Esophagus muscularis mucosa (tissue), 4 donors: ENCODE measurements at regions of chr19 and their contacts with region 1.

Region 1: GRCh38 chr19:36973021-36973843 is 57.1 kb downstream of the ZNF568 start:
- DNase-seq: peak; percentile 95
- H3K4me3 ChIP-seq: peak overlapping the region; percentile 67 to 77 (median 74)
- H3K27ac ChIP-seq: peak overlapping the region; percentile 82 to 87 (median 85)
- H3K4me1 ChIP-seq: peaks cover 10 to 18% (median 17%) of the 10 kb centered on the region in 4 donors
- H3K27me3 ChIP-seq: no peaks in the 10 kb centered on the region
- CTCF ChIP-seq: peak; percentile 93 to 96 (median 94)
- EP300 ChIP-seq: no peak
- POLR2A ChIP-seq: no peak

Region 2: DNA sequence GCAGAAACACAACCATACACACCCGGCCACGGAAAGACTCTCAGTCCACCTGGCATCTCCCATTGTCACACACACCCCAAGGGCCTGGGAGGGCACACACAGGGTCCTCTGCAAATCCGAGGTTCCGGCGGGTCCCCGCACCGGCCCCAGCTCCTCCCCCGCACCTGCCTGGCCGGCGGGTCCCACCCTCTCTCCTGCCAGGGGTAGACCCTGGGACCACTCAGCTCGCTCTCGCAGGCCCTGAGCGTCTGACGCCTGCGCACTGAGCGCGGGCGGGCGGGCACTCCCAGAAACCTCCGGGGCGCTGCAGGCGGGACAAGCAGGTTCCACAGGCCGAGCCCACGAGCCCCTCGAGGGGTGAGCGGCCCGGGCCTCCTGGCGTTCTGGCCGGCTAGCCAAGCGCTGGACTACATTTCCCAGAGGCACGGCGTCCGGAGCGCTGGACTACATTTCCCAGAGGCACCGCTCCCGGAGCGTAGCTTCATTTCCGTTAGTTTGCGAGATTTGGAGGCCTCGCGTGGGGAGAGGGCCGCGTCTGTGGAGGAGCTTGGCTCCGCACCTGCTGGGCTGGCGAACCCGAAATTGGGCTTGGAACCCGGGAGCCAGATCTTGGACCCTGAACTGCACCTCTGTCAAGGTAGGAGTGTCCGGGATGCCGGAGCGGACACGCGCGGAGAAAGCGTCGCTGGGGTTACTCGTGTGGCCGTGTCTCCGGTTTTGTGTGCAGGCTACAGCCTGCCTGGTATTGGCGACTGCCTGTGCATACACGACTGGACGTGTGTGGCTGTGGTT is 104.9 kb after region 1 on chr19 and contains the start of gene ZNF420:
- intact Hi-C with region 1: loop called (anchors 10 kb)
- DNase-seq: peak; percentile 96
- H3K4me3 ChIP-seq: peak within 1 kb of the TSS; percentile 73 to 98 (median 80)
- H3K27ac ChIP-seq: peak within 1 kb of the TSS; percentile 85 to 96 (median 92)
- H3K4me1 ChIP-seq: peaks cover 12 to 27% (median 21%) of the 10 kb centered on the region in 4 donors
- H3K27me3 ChIP-seq: no peaks in the 10 kb centered on the region
- CTCF ChIP-seq: no peak
- EP300 ChIP-seq: no peak
- POLR2A ChIP-seq: no peak
- total RNA-seq, gene ZNF420: 8.5 to 19.1 (median 12.8) TPM

Region 3: GRCh38 chr19:37217855-37218591 is 244.8 kb after region 1 on chr19 and contains the start of gene ZNF383:
- intact Hi-C with region 1: loop called (anchors 5 kb)
- DNase-seq: peak; percentile 95
- H3K4me3 ChIP-seq: peak within 1 kb of the TSS; percentile 79 to 87 (median 84)
- H3K27ac ChIP-seq: peak within 1 kb of the TSS; percentile 86 to 92 (median 89)
- H3K4me1 ChIP-seq: peaks cover 16 to 27% (median 22%) of the 10 kb centered on the region in 4 donors
- H3K27me3 ChIP-seq: no peaks in the 10 kb centered on the region
- CTCF ChIP-seq: no peak
- EP300 ChIP-seq: no peak
- POLR2A ChIP-seq: no peak
- total RNA-seq, gene ZNF383: 9.3 to 11.6 (median 11.2) TPM

Region 4: GRCh38 chr19:37370880-37371661 is 397.8 kb after region 1 on chr19 and contains the start of gene ZNF527:
- intact Hi-C with region 1: loop called (anchors 10 kb)
- DNase-seq: peak; percentile 99
- H3K4me3 ChIP-seq: peak within 1 kb of the TSS; percentile 69 to 82 (median 72)
- H3K27ac ChIP-seq: peak within 1 kb of the TSS; percentile 82 to 90 (median 88)
- H3K4me1 ChIP-seq: peaks cover 13 to 19% (median 17%) of the 10 kb centered on the region in 4 donors
- H3K27me3 ChIP-seq: no peaks in the 10 kb centered on the region
- CTCF ChIP-seq: peak in 1 of 3 experiments; percentile 7
- EP300 ChIP-seq: no peak
- POLR2A ChIP-seq: peak; percentile 59
- total RNA-seq, gene ZNF527: 4.5 to 8.8 (median 5.5) TPM